Left colon (tissue), 2 donors: ENCODE measurements at regions of chr17 and their contacts with region 1.

Region 1: DNA sequence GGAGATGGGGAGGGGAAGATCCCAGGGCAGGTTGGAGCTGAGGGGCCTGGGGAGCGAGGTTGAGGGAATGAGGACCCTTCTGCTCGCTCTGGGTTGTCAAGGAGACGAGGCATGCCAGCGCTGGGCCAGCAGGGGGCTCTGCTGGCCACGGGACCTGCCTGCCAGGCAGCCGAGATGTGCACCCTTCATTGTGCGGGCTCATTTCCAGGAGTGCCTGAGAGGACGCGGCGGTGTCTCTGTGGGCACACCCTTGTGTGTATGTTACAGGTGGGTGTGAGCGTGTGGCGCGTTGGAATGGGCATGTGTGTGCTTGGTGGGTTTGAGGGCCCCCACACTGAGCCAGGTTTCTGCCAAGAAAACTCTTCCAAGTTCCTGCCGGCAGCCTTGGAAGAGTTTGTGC is 15.9 kb downstream of the ARHGAP23 start:
- DNase-seq: peak in 1 of 2 donors; percentile 62
- ATAC-seq: peak; percentile 89

Region 2: DNA sequence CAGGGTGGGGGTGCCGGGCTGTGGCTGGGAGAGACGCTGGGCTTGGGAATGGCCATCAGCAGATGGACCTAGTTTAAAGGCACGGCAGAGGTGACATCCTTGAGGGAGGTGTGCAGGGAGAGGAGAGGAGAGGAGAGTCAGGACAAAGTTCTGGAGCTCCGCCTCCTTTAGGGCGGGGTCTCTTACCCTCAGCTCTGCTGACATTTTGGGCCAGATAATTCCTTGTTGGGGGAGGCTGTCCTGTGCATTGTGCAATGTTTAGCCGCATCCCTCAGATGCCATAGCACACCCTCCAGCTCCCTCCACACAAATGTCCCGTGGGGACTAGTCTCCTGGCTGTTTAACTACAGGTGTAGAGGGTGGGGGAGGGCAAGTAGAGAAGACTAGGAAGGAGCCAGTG is 32.4 kb after region 1 on chr17:
- intact Hi-C with region 1: loop called in 1 of 2 experiments (anchors 5 kb)
- DNase-seq: no peak
- ATAC-seq: no peak